MCF 10A (cell line): ENCODE measurements at regions of chr6 and their contacts with region 1.

Region 1: GRCh38 chr6:27545271-27546046 is 72.6 kb upstream of the ZNF184 start:
- DNase-seq: peak; percentile 87
- H3K4me3 Mint-ChIP-seq: peak overlapping the region; percentile 83
- H3K27ac Mint-ChIP-seq: peak overlapping the region; percentile 91
- H3K4me1 Mint-ChIP-seq: peaks cover 22% of the 10 kb centered on the region
- H3K27me3 Mint-ChIP-seq: no peaks in the 10 kb centered on the region
- CTCF ChIP-seq: no peak

Region 2: GRCh38 chr6:27295301-27296081 is 250.0 kb before region 1 on chr6:
- CTCF ChIA-PET with region 1: no interaction called
- POLR2A ChIA-PET with region 1: no interaction called
- intact Hi-C with region 1: loop called (anchors 2 kb)
- DNase-seq: peak; percentile 87
- H3K4me3 Mint-ChIP-seq: peak overlapping the region; percentile 83
- H3K27ac Mint-ChIP-seq: peak overlapping the region; percentile 29
- H3K4me1 Mint-ChIP-seq: peaks cover 32% of the 10 kb centered on the region
- H3K27me3 Mint-ChIP-seq: no peaks in the 10 kb centered on the region
- CTCF ChIP-seq: no peak

Region 3: GRCh38 chr6:27492631-27493190 is 52.7 kb before region 1 on chr6:
- CTCF ChIA-PET with region 1: no interaction called
- POLR2A ChIA-PET with region 1: no interaction called
- intact Hi-C with region 1: no loop called
- DNase-seq: no peak
- H3K4me3 Mint-ChIP-seq: no peak overlapping the region
- H3K27ac Mint-ChIP-seq: no peak overlapping the region
- H3K4me1 Mint-ChIP-seq: peaks cover 6% of the 10 kb centered on the region
- H3K27me3 Mint-ChIP-seq: no peaks in the 10 kb centered on the region
- CTCF ChIP-seq: no peak

Region 4: GRCh38 chr6:27532820-27533538 is 12.5 kb before region 1 on chr6:
- CTCF ChIA-PET with region 1: no interaction called
- POLR2A ChIA-PET with region 1: interaction called, 10 read pairs
- intact Hi-C with region 1: no loop called
- DNase-seq: peak; percentile 29
- H3K4me3 Mint-ChIP-seq: no peak overlapping the region
- H3K27ac Mint-ChIP-seq: no peak overlapping the region
- H3K4me1 Mint-ChIP-seq: no peaks in the 10 kb centered on the region
- H3K27me3 Mint-ChIP-seq: no peaks in the 10 kb centered on the region
- CTCF ChIP-seq: no peak

Region 5: GRCh38 chr6:27608916-27609883 is 63.7 kb after region 1 on chr6:
- CTCF ChIA-PET with region 1: interaction called, 5 read pairs
- POLR2A ChIA-PET with region 1: interaction called, 17 read pairs
- intact Hi-C with region 1: loop called (anchors 2 kb)
- DNase-seq: peak; percentile 89
- H3K4me3 Mint-ChIP-seq: peak overlapping the region; percentile 47
- H3K27ac Mint-ChIP-seq: peak overlapping the region; percentile 83
- H3K4me1 Mint-ChIP-seq: peaks cover 22% of the 10 kb centered on the region
- H3K27me3 Mint-ChIP-seq: no peaks in the 10 kb centered on the region
- CTCF ChIP-seq: peak; percentile 77

Region 6: GRCh38 chr6:27879837-27880236 is 334.4 kb after region 1 on chr6:
- CTCF ChIA-PET with region 1: no interaction called
- POLR2A ChIA-PET with region 1: no interaction called
- intact Hi-C with region 1: no loop called
- DNase-seq: no peak
- H3K4me3 Mint-ChIP-seq: no peak overlapping the region
- H3K27ac Mint-ChIP-seq: no peak overlapping the region
- H3K4me1 Mint-ChIP-seq: peaks cover 5% of the 10 kb centered on the region
- H3K27me3 Mint-ChIP-seq: no peaks in the 10 kb centered on the region
- CTCF ChIP-seq: no peak